Ascending aorta (tissue), 2 donors: ENCODE measurements at regions of chr5 and their contacts with region 1.

Region 1: GRCh38 chr5:149618581-149619251 is 37.4 kb downstream of the ARHGEF37 start:
- DNase-seq: no peak
- H3K4me3 ChIP-seq: no peak overlapping the region
- H3K27ac ChIP-seq: no peak overlapping the region
- H3K4me1 ChIP-seq: no peaks in the 10 kb centered on the region
- H3K27me3 ChIP-seq: no peaks in the 10 kb centered on the region
- CTCF ChIP-seq: peak; percentile 41 to 62 (median 55)

Region 2: DNA sequence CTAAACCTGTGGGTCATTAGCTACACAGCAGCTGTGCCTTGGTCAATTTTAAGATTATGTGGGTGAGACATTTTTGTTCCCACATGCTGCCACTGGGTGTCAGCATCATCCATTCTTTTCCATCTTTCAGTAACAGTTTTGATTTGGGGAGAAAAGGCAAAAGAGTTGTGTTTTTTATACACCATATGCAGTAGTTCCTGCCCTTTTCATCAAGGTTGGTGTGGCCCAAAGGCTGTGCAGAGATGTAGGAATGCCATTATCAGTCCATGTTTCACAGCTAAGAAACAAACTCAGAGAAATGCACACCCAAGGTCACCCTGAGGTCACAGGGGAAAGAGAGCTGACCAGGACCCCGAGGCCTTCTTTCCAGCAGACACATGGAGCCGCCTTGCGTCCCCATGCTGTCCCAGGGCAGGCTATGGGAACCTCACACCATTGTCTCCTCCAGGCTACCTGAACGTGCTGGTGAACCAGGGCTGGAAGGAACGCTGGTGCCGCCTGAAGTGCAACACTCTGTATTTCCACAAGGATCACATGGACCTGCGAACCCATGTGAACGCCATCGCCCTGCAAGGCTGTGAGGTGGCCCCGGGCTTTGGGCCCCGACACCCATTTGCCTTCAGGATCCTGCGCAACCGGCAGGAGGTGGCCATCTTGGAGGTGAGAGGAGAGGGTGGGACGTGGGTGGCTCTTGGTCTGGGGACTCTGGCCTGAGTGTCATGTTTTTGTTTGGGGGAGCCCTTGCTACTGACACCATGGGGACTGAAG is 301.3 kb before region 1 on chr5:
- intact Hi-C with region 1: loop called (anchors 5 kb)
- DNase-seq: no peak
- H3K4me3 ChIP-seq: no peak overlapping the region
- H3K27ac ChIP-seq: no peak overlapping the region
- H3K4me1 ChIP-seq: peaks cover 0 to 6% of the 10 kb centered on the region in 2 donors
- H3K27me3 ChIP-seq: no peaks in the 10 kb centered on the region
- CTCF ChIP-seq: peak; percentile 43 to 67 (median 60)

Region 3: GRCh38 chr5:149442563-149443182 is 176.0 kb before region 1 on chr5:
- intact Hi-C with region 1: loop called (anchors 1 kb)
- DNase-seq: peak in 1 of 2 donors; percentile 89
- H3K4me3 ChIP-seq: no peak overlapping the region
- H3K27ac ChIP-seq: peak overlapping the region; percentile 58 to 71
- H3K4me1 ChIP-seq: peaks cover 7 to 10% of the 10 kb centered on the region in 2 donors
- H3K27me3 ChIP-seq: no peaks in the 10 kb centered on the region
- CTCF ChIP-seq: peak; percentile 86 to 95 (median 90)

Region 4: DNA sequence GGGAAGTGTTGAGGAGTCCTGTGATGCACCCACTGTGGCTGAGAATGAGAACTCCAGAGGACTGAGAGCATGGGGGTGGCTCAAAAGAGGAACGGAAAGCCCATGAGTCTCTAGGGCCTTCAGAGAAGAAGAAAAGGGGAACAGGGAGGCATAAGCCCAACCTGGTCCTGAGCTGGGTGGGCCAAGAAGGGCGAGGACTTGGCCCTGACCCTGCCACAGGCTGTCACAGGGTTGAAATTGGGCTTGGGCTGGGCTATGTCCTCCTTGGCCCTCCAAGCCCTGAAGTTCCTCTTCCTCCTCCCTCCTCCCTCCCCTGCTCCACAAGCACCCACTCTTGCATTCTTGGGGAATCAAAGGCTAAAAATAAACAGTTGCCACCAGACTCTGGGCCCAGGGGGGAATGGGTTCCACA is 62.1 kb after region 1 on chr5:
- intact Hi-C with region 1: no loop called
- DNase-seq: peak in 1 of 2 donors; percentile 71
- H3K4me3 ChIP-seq: no peak overlapping the region
- H3K27ac ChIP-seq: no peak overlapping the region
- H3K4me1 ChIP-seq: no peaks in the 10 kb centered on the region
- H3K27me3 ChIP-seq: no peaks in the 10 kb centered on the region
- CTCF ChIP-seq: no peak